Heart left ventricle (tissue), 16 donors: ENCODE measurements at regions of chr1 and their contacts with region 1.

Region 1: DNA sequence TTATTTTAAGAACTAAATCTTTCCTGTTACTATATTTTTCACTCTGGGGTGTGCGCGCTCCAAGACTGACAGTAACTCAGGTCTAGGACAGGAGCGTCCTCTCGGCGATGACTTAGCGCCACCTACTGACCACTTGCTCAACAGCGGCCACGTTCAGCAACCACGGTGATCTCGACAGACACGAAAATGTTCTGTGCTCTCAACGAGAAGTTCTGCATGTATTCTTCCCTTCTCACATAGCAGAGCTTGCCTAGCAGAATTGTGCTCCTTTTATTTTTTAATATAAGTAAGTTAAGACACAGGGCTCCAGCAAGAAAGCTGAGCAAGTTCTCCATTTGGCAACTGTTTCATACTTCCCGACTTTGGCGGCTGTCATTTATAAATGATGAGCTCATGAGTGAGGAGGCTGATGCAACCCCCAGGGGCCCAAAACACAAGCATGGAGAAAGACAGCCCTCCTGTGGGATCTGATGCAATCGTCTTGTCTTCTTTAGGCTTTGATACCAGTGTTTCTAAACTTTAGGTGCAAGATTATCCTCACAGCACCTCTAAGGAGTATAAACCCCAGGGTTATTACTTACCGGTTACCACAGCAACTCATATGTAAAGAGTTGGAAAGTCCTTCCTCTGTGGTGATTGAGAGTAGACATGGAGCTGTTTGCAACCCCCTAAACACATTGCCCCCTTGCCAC is 92.6 kb downstream of the HHIPL2 start:
- DNase-seq: peak; percentile 81 to 86 (median 85)
- ATAC-seq: peak; percentile 90 to 98 (median 94)
- H3K4me3 ChIP-seq: peak overlapping the region in 6 of 12 donors; percentile 0 to 27 (median 14)
- H3K27ac ChIP-seq: peak overlapping the region in 2 of 12 donors; percentile 5 to 30
- H3K4me1 ChIP-seq: peaks cover 0 to 12% (median 5%) of the 10 kb centered on the region in 12 donors
- H3K27me3 ChIP-seq: peaks cover 0 to 2% (median 0%) of the 10 kb centered on the region in 9 donors
- CTCF ChIP-seq: peak; percentile 86 to 97 (median 92)
- POLR2A ChIP-seq: no peak

Region 2: DNA sequence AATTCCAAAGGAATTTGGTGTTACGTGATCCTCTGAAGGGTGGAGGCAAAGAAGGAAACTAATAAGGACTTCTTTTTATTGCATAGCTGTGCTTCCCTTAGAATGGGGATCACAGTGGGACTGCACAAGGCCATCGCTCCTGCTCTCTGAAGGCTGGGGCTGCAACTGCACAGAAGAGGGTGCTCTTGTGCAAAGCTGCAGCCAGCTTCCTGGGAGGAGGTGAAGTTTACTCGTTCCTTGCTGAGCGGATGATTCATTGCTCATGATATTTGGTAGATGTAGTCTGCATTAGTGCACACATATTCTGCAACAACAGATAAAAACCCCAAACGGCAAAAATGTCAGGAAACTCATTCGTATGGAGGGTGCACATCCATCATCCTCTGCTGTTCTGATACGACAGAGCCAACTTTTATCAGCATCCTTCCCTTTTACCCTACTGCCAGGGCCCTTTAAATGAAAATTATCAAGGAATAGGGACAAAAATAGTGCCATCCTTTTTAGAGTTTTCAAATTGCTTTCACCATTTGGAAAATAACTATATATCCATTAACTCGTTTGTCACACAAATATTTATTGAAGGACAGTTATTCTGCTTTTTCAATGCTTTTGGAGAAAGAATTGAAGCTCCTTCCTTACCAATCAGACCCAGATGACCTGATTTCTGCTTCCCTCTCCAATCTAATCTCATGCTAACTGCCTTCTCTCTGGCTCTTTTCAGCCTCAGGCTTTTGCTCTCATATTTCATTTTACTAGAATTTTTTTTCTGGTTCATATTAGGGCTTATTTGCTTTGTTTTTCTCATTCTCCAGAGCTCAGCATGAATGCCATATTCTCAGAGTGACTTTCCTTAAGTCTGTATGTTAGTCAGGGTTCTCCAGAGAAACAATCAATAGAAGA is 977.0 kb before region 1 on chr1:
- intact Hi-C with region 1: loop called in 9 of 10 experiments (anchors 1 to 10 kb)
- DNase-seq: peak; percentile 21 to 61 (median 52)
- ATAC-seq: peak in 3 of 4 donors; percentile 72 to 93 (median 88)
- H3K4me3 ChIP-seq: no peak overlapping the region
- H3K27ac ChIP-seq: no peak overlapping the region
- H3K4me1 ChIP-seq: no peaks in the 10 kb centered on the region
- H3K27me3 ChIP-seq: peaks cover 0 to 13% (median 0%) of the 10 kb centered on the region in 9 donors
- CTCF ChIP-seq: peak in 11 of 12 donors; percentile 43 to 69 (median 55)
- POLR2A ChIP-seq: no peak

Region 3: GRCh38 chr1:221543529-221544120 is 911.7 kb before region 1 on chr1:
- intact Hi-C with region 1: loop called in 6 of 10 experiments (anchors 5 to 10 kb)
- DNase-seq: no peak
- ATAC-seq: peak in 1 of 4 donors; percentile 13
- H3K4me3 ChIP-seq: no peak overlapping the region
- H3K27ac ChIP-seq: no peak overlapping the region
- H3K4me1 ChIP-seq: no peaks in the 10 kb centered on the region
- H3K27me3 ChIP-seq: peaks cover 0 to 5% (median 0%) of the 10 kb centered on the region in 9 donors
- CTCF ChIP-seq: peak in 11 of 12 donors; percentile 19 to 64 (median 54)
- POLR2A ChIP-seq: no peak

Region 4: DNA sequence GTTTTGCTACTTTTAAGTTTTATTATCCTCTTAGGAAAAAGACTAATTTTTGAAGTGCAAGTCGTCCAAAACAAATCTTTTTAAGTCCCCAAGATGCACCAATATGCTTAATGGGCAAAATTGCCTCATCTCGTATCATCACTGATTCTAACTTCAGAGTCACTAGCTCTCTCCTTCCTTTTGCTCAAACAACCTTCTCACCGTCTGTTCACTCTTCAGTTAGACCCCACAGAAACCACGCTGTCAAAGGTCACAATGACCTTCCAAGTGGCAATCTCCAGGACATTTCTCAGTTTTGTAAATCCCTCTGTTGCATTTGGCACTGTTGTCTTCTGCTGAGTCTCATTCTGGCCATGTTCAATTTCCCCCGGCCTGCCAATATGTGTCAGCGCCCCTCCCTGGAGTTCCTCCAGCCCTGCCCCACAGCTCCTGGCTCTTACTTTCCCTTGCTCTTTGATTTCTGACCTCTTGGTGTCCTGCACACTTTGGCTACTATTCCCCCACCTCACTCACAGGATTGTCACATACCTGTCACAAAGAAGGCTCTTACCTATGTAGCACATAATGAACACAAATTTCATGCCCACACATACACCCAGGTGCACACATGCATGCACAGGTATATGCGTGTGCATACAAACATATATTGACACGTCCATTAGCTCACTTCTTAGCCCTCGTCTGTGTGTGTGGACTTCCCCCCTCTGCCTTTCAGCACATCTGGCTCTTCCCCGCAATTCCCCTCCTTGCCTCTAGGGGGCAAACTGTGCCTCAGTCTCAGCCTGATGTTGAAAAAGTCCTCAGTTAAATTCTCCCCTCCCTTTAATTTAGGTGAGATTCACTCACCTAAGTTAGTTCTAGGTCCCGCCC is 359.5 kb before region 1 on chr1:
- intact Hi-C with region 1: loop called in 8 of 10 experiments (anchors 1 to 10 kb)
- DNase-seq: peak in 3 of 5 donors; percentile 19 to 31 (median 31)
- ATAC-seq: peak in 1 of 4 donors; percentile 45
- H3K4me3 ChIP-seq: no peak overlapping the region
- H3K27ac ChIP-seq: no peak overlapping the region
- H3K4me1 ChIP-seq: peaks cover 0 to 8% (median 0%) of the 10 kb centered on the region in 12 donors
- H3K27me3 ChIP-seq: peaks cover 0 to 8% (median 0%) of the 10 kb centered on the region in 9 donors
- CTCF ChIP-seq: peak; percentile 56 to 81 (median 75)
- POLR2A ChIP-seq: no peak

Region 5: GRCh38 chr1:222171005-222171404 is 284.3 kb before region 1 on chr1:
- intact Hi-C with region 1: loop called in 1 of 10 experiments (anchors 10 kb)
- DNase-seq: no peak
- ATAC-seq: peak in 3 of 4 donors; percentile 28 to 75 (median 67)
- H3K4me3 ChIP-seq: no peak overlapping the region
- H3K27ac ChIP-seq: no peak overlapping the region
- H3K4me1 ChIP-seq: no peaks in the 10 kb centered on the region
- H3K27me3 ChIP-seq: no peaks in the 10 kb centered on the region
- CTCF ChIP-seq: peak; percentile 29 to 58 (median 41)
- POLR2A ChIP-seq: no peak

Region 6: GRCh38 chr1:222547944-222548671 is 92.8 kb after region 1 on chr1 and contains the start of gene HHIPL2:
- intact Hi-C with region 1: no loop called
- DNase-seq: no peak
- ATAC-seq: no peak
- H3K4me3 ChIP-seq: no peak within 1 kb of the TSS
- H3K27ac ChIP-seq: no peak within 1 kb of the TSS
- H3K4me1 ChIP-seq: no peaks in the 10 kb centered on the region
- H3K27me3 ChIP-seq: peaks cover 0 to 36% (median 6%) of the 10 kb centered on the region in 9 donors
- CTCF ChIP-seq: no peak
- POLR2A ChIP-seq: no peak
- total RNA-seq, gene HHIPL2: 0.27 to 1.1 TPM in 2 of 9 donors, not detected in the others